Activated CD4-positive, alpha-beta memory T cell treated with anti-CD3 and anti-CD28 coated beads, Interleukin-2, amount 10 ng/mL, durations not matched to agents 7 days and 5 days (primary cell): ENCODE measurements at regions of chr9 and their contacts with region 1.

Region 1: DNA sequence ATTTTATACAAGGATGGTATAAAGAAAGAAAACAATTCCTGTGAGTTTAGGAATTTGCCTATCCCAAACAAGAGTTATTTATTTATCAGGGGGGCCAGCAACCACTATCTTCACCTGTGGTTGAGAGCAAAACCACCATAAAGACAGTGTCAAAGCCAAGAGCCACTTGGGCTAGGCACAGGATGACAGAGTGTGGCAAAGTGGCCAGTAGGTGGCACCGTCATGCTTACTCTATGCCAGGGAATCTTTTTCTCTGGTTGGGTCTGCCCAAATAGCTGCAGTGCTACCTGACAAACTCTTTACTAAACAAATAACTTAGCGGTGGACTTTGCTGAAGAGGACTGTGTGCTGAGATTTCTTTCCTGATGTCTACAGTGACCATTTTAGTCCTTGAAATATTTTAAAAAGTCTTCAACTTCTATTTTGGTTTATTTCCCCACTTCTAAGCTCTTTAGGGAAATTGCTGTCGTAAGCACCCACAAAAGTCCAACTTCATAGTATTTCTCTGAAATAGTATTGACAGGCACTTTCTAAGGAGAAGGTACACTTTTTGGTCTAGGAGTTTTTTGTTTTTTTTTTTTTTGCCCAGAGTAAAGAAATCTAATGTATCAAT is 285.0 kb downstream of the RFX3 start:
- DNase-seq: peak; percentile 69
- H3K4me3 Mint-ChIP-seq: no peak overlapping the region
- H3K27ac Mint-ChIP-seq: no peak overlapping the region
- H3K4me1 Mint-ChIP-seq: peaks cover 6% of the 10 kb centered on the region
- H3K27me3 Mint-ChIP-seq: no peaks in the 10 kb centered on the region

Region 2: GRCh38 chr9:3099646-3100045 is 141.1 kb before region 1 on chr9:
- CTCF ChIA-PET with region 1: no interaction called
- POLR2A ChIA-PET with region 1: no interaction called
- DNase-seq: no peak
- H3K4me3 Mint-ChIP-seq: no peak overlapping the region
- H3K27ac Mint-ChIP-seq: no peak overlapping the region
- H3K4me1 Mint-ChIP-seq: no peaks in the 10 kb centered on the region
- H3K27me3 Mint-ChIP-seq: no peaks in the 10 kb centered on the region

Region 3: DNA sequence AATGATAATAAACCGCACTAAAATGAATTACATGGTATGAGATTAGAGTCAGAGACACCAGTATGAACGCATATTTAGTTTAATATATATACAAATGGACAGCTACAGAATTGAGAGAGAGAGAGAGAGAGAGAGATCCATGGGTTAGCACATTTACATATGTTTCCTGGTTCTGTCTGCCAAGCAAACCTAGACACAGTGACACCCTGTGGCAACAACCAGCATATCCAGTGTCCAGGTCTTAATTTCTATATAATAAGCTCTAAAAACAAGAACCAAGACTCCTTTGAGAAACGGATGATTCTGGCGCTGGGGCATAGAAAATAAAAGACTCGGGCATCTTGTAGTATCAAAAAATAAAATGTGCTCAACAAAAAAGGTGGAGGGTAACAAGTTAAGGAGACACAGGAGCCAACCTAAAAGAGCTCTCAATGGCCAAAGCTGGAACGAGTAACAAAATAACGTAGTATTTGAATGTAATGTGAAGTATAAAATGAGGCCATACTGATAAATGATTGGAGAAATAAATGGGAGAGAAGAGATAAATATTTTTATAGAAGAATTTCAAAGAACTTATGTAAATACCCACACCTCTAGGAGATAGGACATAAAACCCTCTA is 200.5 kb after region 1 on chr9:
- CTCF ChIA-PET with region 1: interaction called, 61 read pairs
- POLR2A ChIA-PET with region 1: no interaction called
- DNase-seq: peak; percentile 52
- H3K4me3 Mint-ChIP-seq: no peak overlapping the region
- H3K27ac Mint-ChIP-seq: no peak overlapping the region
- H3K4me1 Mint-ChIP-seq: no peaks in the 10 kb centered on the region
- H3K27me3 Mint-ChIP-seq: no peaks in the 10 kb centered on the region